Activated CD4-positive, alpha-beta T cell treated with anti-CD3 and anti-CD28 coated beads, Interleukin-2, amount 10 ng/mL, durations not matched to agents 24 days and 14 days (primary cell): ENCODE measurements at regions of chr14 and their contacts with region 1.

Region 1: GRCh38 chr14:92768795-92769194 is 20.4 kb upstream of the LGMN start:
- DNase-seq: no peak
- H3K4me3 Mint-ChIP-seq: no peak overlapping the region
- H3K27ac Mint-ChIP-seq: peak overlapping the region; percentile 14
- H3K4me1 Mint-ChIP-seq: peaks cover 18% of the 10 kb centered on the region
- H3K27me3 Mint-ChIP-seq: peaks cover 31% of the 10 kb centered on the region

Region 2: DNA sequence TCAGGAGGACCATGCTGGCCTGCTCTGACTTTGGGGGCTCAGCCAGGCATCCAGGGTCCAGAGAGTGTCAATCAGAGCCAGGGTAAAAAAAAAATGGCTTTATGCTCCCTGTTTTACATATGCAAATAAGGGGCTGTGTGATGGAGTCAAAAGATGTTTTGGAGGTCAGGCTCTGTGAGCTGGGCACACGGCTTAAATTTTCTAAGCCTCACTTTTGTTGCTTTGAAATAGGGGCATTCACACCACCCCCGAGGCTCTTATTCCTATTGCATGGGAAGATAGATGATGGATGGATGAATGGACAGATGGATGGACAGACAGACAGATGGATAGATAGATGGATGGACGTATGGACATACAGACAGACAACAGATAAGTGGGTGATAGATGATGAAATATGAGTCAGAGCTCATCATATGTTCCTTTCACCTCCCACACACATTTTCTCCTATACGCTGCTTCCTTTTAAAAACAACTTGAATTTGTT is 212.5 kb before region 1 on chr14:
- intact Hi-C with region 1: loop called (anchors 2 kb)
- DNase-seq: no peak
- H3K4me3 Mint-ChIP-seq: peak overlapping the region; percentile 33
- H3K27ac Mint-ChIP-seq: peak overlapping the region; percentile 88
- H3K4me1 Mint-ChIP-seq: peaks cover 62% of the 10 kb centered on the region
- H3K27me3 Mint-ChIP-seq: peaks cover 17% of the 10 kb centered on the region

Region 3: GRCh38 chr14:92568621-92569479 is 199.9 kb before region 1 on chr14:
- intact Hi-C with region 1: no loop called
- DNase-seq: peak; percentile 78
- H3K4me3 Mint-ChIP-seq: peak overlapping the region; percentile 59
- H3K27ac Mint-ChIP-seq: peak overlapping the region; percentile 86
- H3K4me1 Mint-ChIP-seq: peaks cover 33% of the 10 kb centered on the region
- H3K27me3 Mint-ChIP-seq: peaks cover 9% of the 10 kb centered on the region

Region 4: GRCh38 chr14:92729626-92730358 is 39.0 kb before region 1 on chr14:
- intact Hi-C with region 1: loop called (anchors 1 kb)
- DNase-seq: peak; percentile 62
- H3K4me3 Mint-ChIP-seq: no peak overlapping the region
- H3K27ac Mint-ChIP-seq: peak overlapping the region; percentile 74
- H3K4me1 Mint-ChIP-seq: peaks cover 21% of the 10 kb centered on the region
- H3K27me3 Mint-ChIP-seq: peaks cover 47% of the 10 kb centered on the region